ENCODE measurements at regions of chr10 and their contacts with region 1.

Region 1: GRCh38 chr10:114470956-114471905 is 66.9 kb upstream of the AFAP1L2 start:
- DNase-seq: peak; percentile 45 to 89
- ATAC-seq: peak; percentile 82 to 98 (median 96)
- H3K4me3 ChIP-seq: no peak overlapping the region
- H3K4me3 Mint-ChIP-seq: no peak overlapping the region
- H3K27ac ChIP-seq: no peak overlapping the region
- H3K27ac Mint-ChIP-seq: peak overlapping the region in 1 of 2 donors; percentile 59
- H3K4me1 ChIP-seq: peaks cover 3% of the 10 kb centered on the region
- H3K4me1 Mint-ChIP-seq: peaks cover 7 to 10% of the 10 kb centered on the region in 2 donors
- H3K27me3 ChIP-seq: no peaks in the 10 kb centered on the region
- H3K27me3 Mint-ChIP-seq: no peaks in the 10 kb centered on the region
- CTCF ChIP-seq: peak; percentile 95

Region 2: DNA sequence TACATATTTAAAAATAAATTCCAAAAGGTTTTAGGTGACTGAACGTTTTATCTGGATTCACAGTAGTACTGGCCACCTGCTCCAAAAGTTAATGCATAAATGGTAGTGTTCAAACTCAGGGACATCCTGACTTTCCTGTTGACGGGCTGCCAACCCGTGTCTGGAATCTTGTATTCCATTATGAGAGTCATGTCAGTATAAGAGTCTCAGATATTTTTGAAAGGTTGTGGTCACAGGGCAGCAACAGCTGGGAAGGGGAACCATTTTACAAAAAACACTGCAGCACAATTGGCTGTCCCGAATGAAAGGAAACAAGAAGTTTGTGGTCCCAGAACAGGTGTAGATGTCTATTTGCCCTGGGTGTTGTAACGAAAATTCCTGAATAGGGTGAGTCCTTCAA is 289.2 kb before region 1 on chr10:
- intact Hi-C with region 1: no loop called
- DNase-seq: no peak
- ATAC-seq: no peak
- H3K4me3 ChIP-seq: no peak overlapping the region
- H3K4me3 Mint-ChIP-seq: no peak overlapping the region
- H3K27ac ChIP-seq: no peak overlapping the region
- H3K27ac Mint-ChIP-seq: no peak overlapping the region
- H3K4me1 ChIP-seq: no peaks in the 10 kb centered on the region
- H3K4me1 Mint-ChIP-seq: no peaks in the 10 kb centered on the region
- H3K27me3 ChIP-seq: no peaks in the 10 kb centered on the region
- H3K27me3 Mint-ChIP-seq: peaks cover 18 to 35% of the 10 kb centered on the region in 2 donors
- CTCF ChIP-seq: no peak

Region 3: GRCh38 chr10:114388275-114388674 is 83.0 kb before region 1 on chr10:
- intact Hi-C with region 1: no loop called
- DNase-seq: no peak
- ATAC-seq: no peak
- H3K4me3 ChIP-seq: no peak overlapping the region
- H3K4me3 Mint-ChIP-seq: no peak overlapping the region
- H3K27ac ChIP-seq: no peak overlapping the region
- H3K27ac Mint-ChIP-seq: no peak overlapping the region
- H3K4me1 ChIP-seq: no peaks in the 10 kb centered on the region
- H3K4me1 Mint-ChIP-seq: peaks cover 0 to 4% of the 10 kb centered on the region in 2 donors
- H3K27me3 ChIP-seq: peaks cover 2% of the 10 kb centered on the region
- H3K27me3 Mint-ChIP-seq: peaks cover 9 to 12% of the 10 kb centered on the region in 2 donors
- CTCF ChIP-seq: no peak

Region 4: DNA sequence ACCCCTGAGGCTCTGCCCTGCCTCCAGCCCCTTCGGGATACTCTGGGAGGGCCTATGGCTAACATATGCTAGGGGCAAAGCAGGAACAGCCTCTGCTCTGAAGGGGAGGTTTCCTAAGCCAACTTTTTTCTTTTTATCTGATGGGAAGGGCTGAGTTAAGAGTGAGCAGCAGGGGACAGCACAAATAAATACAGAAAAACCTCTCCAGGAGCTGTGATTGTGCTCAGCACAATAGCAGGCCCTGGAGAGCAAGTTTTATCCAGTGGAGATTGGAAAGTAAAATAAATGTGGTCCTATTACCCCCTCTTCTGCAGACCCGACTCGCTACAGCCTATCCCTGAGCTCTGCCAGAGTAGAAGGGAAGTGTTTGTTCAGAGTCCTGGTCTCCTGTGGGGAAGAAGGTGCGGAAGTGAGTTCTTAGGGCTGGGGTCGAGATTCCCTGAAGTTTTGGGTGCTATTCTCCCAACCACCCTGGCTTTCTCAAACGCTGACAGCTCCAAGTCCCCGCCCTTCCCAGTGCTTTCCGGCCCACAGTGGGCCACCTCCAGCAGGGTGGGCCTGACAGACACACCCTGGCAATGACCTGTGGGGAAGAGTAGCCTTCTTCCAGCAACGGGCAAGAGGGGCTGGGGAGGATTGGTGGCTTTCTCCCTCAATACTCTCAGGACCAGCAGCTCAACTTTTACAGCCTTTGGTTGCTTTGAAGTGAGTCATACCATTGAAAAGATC is 43.9 kb before region 1 on chr10:
- intact Hi-C with region 1: no loop called
- DNase-seq: no peak
- ATAC-seq: no peak
- H3K4me3 ChIP-seq: no peak overlapping the region
- H3K4me3 Mint-ChIP-seq: no peak overlapping the region
- H3K27ac ChIP-seq: no peak overlapping the region
- H3K27ac Mint-ChIP-seq: no peak overlapping the region
- H3K4me1 ChIP-seq: no peaks in the 10 kb centered on the region
- H3K4me1 Mint-ChIP-seq: no peaks in the 10 kb centered on the region
- H3K27me3 ChIP-seq: no peaks in the 10 kb centered on the region
- H3K27me3 Mint-ChIP-seq: peaks cover 0 to 3% of the 10 kb centered on the region in 2 donors
- CTCF ChIP-seq: no peak

Region 5: GRCh38 chr10:114526504-114527238 is 55.4 kb after region 1 on chr10:
- intact Hi-C with region 1: loop called (anchors 10 kb)
- DNase-seq: peak; percentile 80 to 97
- ATAC-seq: peak; percentile 90 to 95 (median 94)
- H3K4me3 ChIP-seq: peak overlapping the region; percentile 48
- H3K4me3 Mint-ChIP-seq: peak overlapping the region; percentile 97
- H3K27ac ChIP-seq: peak overlapping the region; percentile 88
- H3K27ac Mint-ChIP-seq: peak overlapping the region; percentile 96 to 99
- H3K4me1 ChIP-seq: peaks cover 44% of the 10 kb centered on the region
- H3K4me1 Mint-ChIP-seq: peaks cover 52 to 57% of the 10 kb centered on the region in 2 donors
- H3K27me3 ChIP-seq: no peaks in the 10 kb centered on the region
- H3K27me3 Mint-ChIP-seq: no peaks in the 10 kb centered on the region
- CTCF ChIP-seq: no peak

Region 6: GRCh38 chr10:114703377-114704107 is 232.3 kb after region 1 on chr10:
- intact Hi-C with region 1: loop called (anchors 2 kb)
- DNase-seq: peak in 1 of 2 donors; percentile 62
- ATAC-seq: peak in 2 of 3 donors; percentile 27 to 37
- H3K4me3 ChIP-seq: no peak overlapping the region
- H3K4me3 Mint-ChIP-seq: no peak overlapping the region
- H3K27ac ChIP-seq: no peak overlapping the region
- H3K27ac Mint-ChIP-seq: no peak overlapping the region
- H3K4me1 ChIP-seq: no peaks in the 10 kb centered on the region
- H3K4me1 Mint-ChIP-seq: no peaks in the 10 kb centered on the region
- H3K27me3 ChIP-seq: no peaks in the 10 kb centered on the region
- H3K27me3 Mint-ChIP-seq: peaks cover 6 to 17% of the 10 kb centered on the region in 2 donors
- CTCF ChIP-seq: peak; percentile 36

Region 7: DNA sequence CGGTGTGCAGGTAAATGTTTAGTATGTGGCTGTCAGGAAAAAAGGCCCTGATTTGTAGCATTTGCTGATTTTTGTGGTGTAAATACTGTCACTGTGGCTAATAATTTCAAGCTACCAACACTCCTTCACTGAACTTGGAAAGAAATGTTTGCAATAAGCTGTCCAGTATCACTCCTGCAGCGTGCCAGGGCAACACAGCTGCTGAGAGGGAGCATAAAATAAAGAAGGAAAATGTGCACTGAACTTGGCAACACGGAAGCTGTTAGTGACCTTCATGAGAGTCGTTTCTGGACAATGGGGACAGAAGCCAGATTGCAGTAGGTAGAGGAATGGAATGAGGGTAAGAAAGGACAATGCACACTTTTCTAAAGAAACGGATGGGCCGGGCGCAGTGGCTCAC is 312.5 kb after region 1 on chr10:
- intact Hi-C with region 1: loop called (anchors 1 kb)
- DNase-seq: no peak
- ATAC-seq: no peak
- H3K4me3 ChIP-seq: no peak overlapping the region
- H3K4me3 Mint-ChIP-seq: no peak overlapping the region
- H3K27ac ChIP-seq: no peak overlapping the region
- H3K27ac Mint-ChIP-seq: no peak overlapping the region
- H3K4me1 ChIP-seq: no peaks in the 10 kb centered on the region
- H3K4me1 Mint-ChIP-seq: no peaks in the 10 kb centered on the region
- H3K27me3 ChIP-seq: no peaks in the 10 kb centered on the region
- H3K27me3 Mint-ChIP-seq: peaks cover 0 to 3% of the 10 kb centered on the region in 2 donors
- CTCF ChIP-seq: no peak

Region 8: GRCh38 chr10:114876602-114877300 is 405.5 kb after region 1 on chr10:
- intact Hi-C with region 1: loop called (anchors 5 kb)
- DNase-seq: peak in 1 of 2 donors; percentile 44
- ATAC-seq: peak in 1 of 3 donors; percentile 49
- H3K4me3 ChIP-seq: no peak overlapping the region
- H3K4me3 Mint-ChIP-seq: no peak overlapping the region
- H3K27ac ChIP-seq: no peak overlapping the region
- H3K27ac Mint-ChIP-seq: no peak overlapping the region
- H3K4me1 ChIP-seq: peaks cover 6% of the 10 kb centered on the region
- H3K4me1 Mint-ChIP-seq: peaks cover 0 to 15% of the 10 kb centered on the region in 2 donors
- H3K27me3 ChIP-seq: no peaks in the 10 kb centered on the region
- H3K27me3 Mint-ChIP-seq: peaks cover 24 to 55% of the 10 kb centered on the region in 2 donors
- CTCF ChIP-seq: no peak

Region 9: DNA sequence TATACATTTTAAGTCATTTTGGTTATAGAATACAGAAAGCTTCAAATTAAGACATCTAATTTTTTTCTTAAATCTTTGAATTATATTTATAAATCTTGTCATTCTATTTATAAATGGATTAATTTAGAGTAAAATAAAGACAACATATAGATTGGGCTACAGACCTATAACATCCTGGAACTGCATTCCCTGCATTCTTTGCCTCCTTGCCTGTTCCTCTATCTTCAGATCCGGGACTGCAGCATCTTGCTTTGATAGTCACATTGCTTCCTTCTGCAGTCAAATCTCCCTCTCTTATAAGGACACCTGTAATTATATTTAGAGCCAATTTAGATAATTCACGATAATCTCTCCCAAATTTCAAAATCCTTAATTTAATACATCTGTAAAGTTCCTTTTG is 686.1 kb after region 1 on chr10:
- intact Hi-C with region 1: no loop called
- DNase-seq: no peak
- ATAC-seq: no peak
- H3K4me3 ChIP-seq: no peak overlapping the region
- H3K4me3 Mint-ChIP-seq: no peak overlapping the region
- H3K27ac ChIP-seq: no peak overlapping the region
- H3K27ac Mint-ChIP-seq: no peak overlapping the region
- H3K4me1 ChIP-seq: no peaks in the 10 kb centered on the region
- H3K4me1 Mint-ChIP-seq: no peaks in the 10 kb centered on the region
- H3K27me3 ChIP-seq: no peaks in the 10 kb centered on the region
- H3K27me3 Mint-ChIP-seq: peaks cover 3 to 10% of the 10 kb centered on the region in 2 donors
- CTCF ChIP-seq: no peak